Activated CD4-positive, alpha-beta T cell treated with anti-CD3 and anti-CD28 coated beads for 36 hours (primary cell): ENCODE measurements at regions of chr5 and their contacts with region 1.

Region 1: DNA sequence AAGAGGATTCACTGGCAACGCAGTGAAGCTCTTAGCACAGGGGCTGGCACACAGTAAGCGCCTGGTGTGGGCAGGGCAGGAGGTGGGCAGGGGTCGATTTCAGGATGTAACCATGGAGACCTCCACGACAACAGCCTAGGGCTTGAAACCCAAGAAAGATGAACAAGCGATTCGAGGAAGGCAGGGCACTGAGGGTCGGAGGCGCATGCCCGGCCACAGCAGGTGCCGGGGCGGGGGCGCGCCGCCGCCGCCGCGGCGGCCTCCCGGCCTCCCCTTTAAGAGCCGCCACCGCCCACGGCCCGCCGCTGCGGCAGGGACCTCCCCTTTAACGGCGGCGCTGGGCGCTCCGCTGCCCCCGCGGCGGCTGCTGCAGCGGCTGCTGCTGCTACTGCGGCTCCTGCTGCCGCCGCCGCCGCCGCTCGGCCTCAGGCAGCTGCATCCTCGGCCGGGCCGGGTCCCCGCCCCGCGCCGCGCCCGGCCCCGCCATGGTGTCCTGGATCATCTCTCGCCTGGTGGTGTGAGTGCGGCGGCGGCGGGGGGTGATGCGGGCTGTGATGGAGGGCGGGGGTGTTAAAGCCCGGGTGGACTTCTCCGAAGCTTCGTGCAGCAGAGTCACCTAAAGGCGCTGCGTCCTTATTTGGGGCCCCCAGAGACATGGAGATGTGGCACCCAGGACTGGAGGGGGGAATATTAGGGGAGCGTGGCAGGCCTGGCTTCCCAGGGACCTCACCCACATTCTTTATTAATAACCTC is at the start of gene REEP2:
- DNase-seq: peak; percentile 86
- ATAC-seq: peak; percentile 88
- H3K4me3 Mint-ChIP-seq: peak within 1 kb of the TSS; percentile 67
- H3K27ac Mint-ChIP-seq: no peak within 1 kb of the TSS
- H3K4me1 Mint-ChIP-seq: peaks cover 15% of the 10 kb centered on the region
- H3K27me3 Mint-ChIP-seq: no peaks in the 10 kb centered on the region
- total RNA-seq, gene REEP2: 4.0 to 5.6 TPM

Region 2: DNA sequence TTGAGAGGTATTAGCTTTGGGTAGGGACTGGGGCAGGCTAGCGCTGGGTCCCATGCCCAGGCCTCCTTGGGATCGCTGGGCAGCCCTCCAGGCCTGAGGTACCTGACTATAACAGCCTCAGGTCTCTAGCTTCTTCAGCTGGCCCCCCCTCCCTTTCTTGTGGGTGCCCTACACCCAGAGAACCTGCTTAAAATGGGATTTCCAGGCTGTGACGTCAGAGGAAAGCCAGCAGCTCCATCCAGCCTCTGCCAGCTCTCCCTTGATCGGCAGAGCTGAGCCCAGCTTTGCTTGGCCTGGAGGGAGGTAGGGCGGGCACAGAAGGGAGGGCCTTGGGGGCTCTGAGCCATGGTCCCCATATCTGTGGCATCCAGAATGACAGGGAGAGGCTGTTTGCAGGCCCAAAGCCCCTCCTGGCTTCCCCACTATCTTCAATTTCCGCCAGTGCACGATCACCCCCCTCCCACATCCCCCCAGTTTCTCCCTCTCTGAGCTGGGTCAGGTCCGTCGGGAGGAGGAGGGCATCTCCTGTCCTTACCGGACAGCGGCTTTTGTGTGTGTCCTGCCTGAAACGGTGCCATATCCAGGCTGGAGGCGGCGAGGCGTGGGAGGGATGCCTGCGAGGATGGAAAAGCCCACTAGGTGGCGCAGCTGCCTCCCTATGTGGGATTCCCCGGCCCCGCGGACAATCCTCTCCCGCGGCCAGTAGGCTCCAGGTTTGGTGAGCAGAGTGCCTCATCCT is 10.8 kb after region 1 on chr5:
- CTCF ChIA-PET with region 1: interaction called, 12 read pairs
- POLR2A ChIA-PET with region 1: no interaction called
- intact Hi-C with region 1: no loop called
- DNase-seq: peak; percentile 93
- ATAC-seq: peak; percentile 97
- H3K4me3 Mint-ChIP-seq: peak overlapping the region; percentile 23
- H3K27ac Mint-ChIP-seq: peak overlapping the region; percentile 47
- H3K4me1 Mint-ChIP-seq: peaks cover 5% of the 10 kb centered on the region
- H3K27me3 Mint-ChIP-seq: no peaks in the 10 kb centered on the region

Region 3: GRCh38 chr5:138491669-138492559 is 53.0 kb after region 1 on chr5:
- CTCF ChIA-PET with region 1: no interaction called
- POLR2A ChIA-PET with region 1: no interaction called
- intact Hi-C with region 1: loop called in 1 of 2 experiments (anchors 2 kb)
- DNase-seq: peak; percentile 92
- ATAC-seq: peak; percentile 99
- H3K4me3 Mint-ChIP-seq: peak overlapping the region; percentile 84
- H3K27ac Mint-ChIP-seq: peak overlapping the region; percentile 79
- H3K4me1 Mint-ChIP-seq: peaks cover 15% of the 10 kb centered on the region
- H3K27me3 Mint-ChIP-seq: peaks cover 23% of the 10 kb centered on the region

Region 4: DNA sequence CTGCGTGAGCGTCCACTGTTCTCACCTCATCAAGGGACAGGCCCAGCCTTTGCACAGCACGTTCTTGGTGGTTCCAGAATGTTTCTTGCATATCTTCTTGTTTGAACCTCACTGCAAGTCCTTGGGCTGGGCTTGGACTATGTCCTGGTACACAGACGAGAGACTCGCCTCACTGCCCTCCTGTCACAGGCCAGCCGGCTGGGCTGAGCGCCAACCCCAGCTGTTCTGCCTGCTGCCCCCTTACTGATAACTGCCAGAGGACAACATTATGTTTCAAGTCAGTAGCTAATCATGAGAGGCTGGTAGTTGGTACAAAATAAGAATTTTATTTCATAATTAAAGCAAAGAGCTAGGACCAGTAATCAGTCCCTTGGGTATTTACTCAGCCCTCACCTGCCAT is 489.1 kb after region 1 on chr5:
- CTCF ChIA-PET with region 1: no interaction called
- POLR2A ChIA-PET with region 1: no interaction called
- intact Hi-C with region 1: no loop called
- DNase-seq: no peak
- ATAC-seq: no peak
- H3K4me3 Mint-ChIP-seq: no peak overlapping the region
- H3K27ac Mint-ChIP-seq: no peak overlapping the region
- H3K4me1 Mint-ChIP-seq: no peaks in the 10 kb centered on the region
- H3K27me3 Mint-ChIP-seq: no peaks in the 10 kb centered on the region